ENCODE measurements at regions of chr16 and their contacts with region 1.

Region 1: DNA sequence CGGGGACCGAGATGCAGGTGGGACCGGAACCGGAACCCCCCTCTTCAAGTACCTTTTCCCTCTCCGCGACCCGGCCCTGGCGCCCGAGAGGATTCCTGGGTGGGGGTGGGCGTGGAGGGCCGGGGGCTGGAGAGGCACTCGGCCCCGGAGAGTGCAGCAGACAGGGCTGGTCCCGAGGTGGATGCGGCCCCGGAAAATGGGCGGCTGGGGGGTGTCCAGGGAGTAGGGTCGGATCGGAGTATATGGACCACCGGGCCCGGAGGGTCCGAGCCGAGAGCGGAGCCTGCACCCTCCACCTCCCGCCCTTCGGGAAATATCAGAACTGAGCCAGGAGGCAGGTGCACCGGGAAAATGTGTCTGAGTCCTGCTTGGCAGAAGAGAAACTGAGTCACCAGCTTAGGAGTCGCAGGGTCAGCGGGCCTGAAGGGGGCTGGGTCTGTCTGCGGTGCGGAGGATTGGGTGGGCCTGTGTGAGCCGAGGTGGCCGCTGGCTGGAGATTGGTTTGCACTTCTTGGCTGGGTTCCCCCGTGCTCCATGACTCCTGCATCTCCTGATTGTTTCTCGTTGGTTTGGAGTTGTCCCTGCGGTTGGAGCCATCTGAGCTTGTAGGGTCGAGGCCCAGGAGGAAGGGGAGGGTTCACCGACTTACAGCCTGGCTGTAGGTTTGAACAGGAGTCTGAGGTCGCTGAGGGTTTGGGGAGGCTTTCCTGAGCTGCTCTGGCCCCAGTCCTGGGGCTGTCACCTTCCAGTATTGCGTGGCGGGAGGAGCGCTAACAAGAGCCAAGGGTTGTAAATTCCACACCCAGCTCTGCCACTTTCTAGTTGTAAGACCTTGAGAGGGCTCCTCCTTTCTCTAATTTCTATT is 518 bp downstream of the SH2B1 start:
- DNase-seq: no peak
- ATAC-seq: no peak
- H3K4me3 Mint-ChIP-seq: peak overlapping the region; percentile 98
- H3K27ac Mint-ChIP-seq: peak overlapping the region; percentile 95
- H3K4me1 Mint-ChIP-seq: peaks cover 22% of the 10 kb centered on the region
- H3K27me3 Mint-ChIP-seq: no peaks in the 10 kb centered on the region

Region 2: DNA sequence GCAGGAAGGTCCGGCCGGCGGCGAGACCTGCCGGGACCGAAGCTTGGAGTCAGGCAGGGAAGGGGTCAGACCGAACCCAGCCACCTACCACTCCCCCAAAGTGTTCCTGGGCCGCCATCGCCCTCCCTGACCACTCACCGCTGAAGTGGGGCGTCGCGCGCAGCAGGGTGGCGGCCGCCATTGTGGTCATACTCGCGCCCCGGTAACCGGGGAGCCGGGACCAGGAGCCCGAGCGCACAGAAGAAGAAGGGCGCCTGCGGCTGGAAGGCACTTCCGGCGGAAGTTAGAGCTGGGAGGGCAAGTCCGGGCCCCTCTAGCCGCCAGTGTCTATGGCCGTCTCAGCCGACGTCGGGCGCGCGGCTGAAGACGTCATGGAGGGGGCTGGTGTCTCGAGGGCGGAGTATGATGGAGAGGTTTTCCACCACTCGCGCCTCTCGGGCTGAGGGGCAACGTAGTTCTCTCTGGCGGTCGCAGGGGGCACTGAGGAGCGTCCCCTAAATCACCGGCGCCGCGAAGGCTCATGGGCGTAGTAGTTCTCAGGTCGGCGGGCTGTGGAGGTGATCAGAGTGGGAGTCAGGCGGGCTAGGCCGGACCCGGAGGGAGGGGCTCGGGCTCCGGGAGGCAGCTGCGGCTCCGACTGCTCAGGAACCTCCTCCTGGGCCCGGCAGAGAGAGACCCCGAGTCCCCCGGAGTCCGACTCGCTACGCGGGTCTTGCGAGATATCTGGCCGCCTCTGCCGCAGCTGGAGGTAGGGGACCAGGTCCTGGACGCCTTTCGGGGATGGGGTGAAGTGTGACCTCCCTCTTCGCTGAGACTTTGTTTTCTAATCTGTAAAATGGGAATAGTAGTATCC is 17.9 kb before region 1 on chr16 and contains the start of gene TUFM:
- POLR2A ChIA-PET with region 1: interaction called, 100 read pairs
- DNase-seq: peak; percentile 96
- ATAC-seq: peak; percentile 92
- H3K4me3 Mint-ChIP-seq: peak within 1 kb of the TSS; percentile 88
- H3K27ac Mint-ChIP-seq: peak within 1 kb of the TSS; percentile 93
- H3K4me1 Mint-ChIP-seq: peaks cover 19% of the 10 kb centered on the region
- H3K27me3 Mint-ChIP-seq: no peaks in the 10 kb centered on the region
- total RNA-seq, gene TUFM: 117 to 119 TPM

Region 3: GRCh38 chr16:28879841-28880588 is 15.9 kb after region 1 on chr16:
- POLR2A ChIA-PET with region 1: interaction called, 46 read pairs
- DNase-seq: peak; percentile 89
- ATAC-seq: peak; percentile 94
- H3K4me3 Mint-ChIP-seq: peak overlapping the region; percentile 92
- H3K27ac Mint-ChIP-seq: peak overlapping the region; percentile 82
- H3K4me1 Mint-ChIP-seq: peaks cover 27% of the 10 kb centered on the region
- H3K27me3 Mint-ChIP-seq: no peaks in the 10 kb centered on the region

Region 4: DNA sequence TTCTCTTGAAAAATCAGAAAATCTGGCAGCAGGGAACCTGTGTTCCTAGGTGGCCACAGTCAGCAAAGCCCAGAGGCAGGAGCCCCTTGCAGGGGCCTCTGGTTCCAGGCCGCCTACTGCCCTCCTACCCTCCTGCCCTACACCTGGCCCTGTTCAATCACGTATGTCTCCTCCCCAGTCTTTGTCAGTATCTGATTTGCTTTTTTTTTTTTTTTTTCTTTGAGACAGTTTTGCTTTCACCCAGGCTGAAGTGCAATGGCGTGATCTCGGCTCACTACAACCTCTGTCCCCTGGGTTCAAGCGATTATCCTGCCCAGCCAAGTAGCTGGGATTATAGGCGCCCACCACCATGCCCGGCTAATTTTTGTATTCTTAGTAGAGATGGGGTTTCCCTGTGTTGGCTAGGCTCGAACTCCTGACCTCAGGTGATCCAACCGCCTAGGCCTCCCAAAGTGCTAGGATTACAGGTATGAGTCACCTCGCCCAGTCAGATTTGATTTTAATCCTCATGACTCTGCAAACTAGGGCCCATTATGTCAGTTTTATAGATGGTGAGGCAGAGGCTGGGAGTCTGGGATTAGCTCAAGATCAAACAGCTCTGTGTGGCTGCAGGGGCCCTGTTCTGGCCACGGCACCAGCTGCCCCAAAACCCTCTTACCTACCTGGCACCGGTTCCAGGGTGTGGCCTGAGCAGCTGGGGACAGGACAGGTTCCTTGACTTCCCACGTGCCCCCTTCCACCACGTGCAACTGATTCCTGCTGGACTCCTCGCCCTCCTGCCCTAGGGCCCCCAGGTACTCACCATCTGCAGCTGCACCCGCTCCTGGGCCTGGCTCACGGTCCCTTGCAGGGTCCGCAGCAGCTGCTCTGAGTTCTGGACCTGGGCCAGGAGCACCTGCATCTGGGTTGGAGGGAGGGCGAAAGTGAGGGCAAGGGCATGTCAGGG is 46.2 kb after region 1 on chr16:
- POLR2A ChIA-PET with region 1: no interaction called
- DNase-seq: no peak
- ATAC-seq: no peak
- H3K4me3 Mint-ChIP-seq: no peak overlapping the region
- H3K27ac Mint-ChIP-seq: no peak overlapping the region
- H3K4me1 Mint-ChIP-seq: no peaks in the 10 kb centered on the region
- H3K27me3 Mint-ChIP-seq: no peaks in the 10 kb centered on the region

Region 5: DNA sequence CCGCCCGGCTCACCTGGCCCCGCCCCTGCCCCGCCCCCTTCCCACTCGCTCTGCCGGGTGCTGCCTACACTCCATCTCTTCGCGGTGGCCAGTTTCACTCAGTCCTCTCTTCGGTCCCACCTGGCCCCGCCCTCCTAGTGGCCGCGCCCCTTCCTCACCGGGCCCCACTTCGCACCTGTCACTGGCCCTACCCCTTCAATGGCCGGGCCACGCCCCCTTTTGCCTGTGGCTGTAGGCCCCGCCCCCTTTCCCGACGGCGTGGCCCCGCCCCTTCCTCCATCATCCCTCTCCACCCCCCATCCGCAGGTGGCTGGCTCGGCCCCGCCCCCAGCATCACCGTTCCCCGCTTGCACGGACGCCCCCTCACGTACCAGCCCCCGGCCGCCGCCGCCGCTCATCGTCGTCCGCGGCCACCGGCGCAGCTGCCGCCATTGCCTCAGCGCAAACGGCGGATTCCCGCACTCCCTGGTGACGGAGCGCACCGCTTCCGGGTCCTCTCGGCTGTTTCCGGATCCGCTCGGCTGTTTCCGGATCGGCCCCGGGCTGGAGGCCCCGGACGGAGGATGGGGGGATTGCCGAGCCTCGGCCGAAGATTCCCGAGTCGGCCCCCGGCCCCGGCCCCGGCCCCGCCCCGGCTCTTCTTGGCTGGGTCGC is 60.7 kb after region 1 on chr16 and contains the start of gene RABEP2:
- POLR2A ChIA-PET with region 1: interaction called, 11 read pairs
- DNase-seq: peak; percentile 99
- ATAC-seq: peak; percentile 88
- H3K4me3 Mint-ChIP-seq: peak within 1 kb of the TSS; percentile 99
- H3K27ac Mint-ChIP-seq: peak within 1 kb of the TSS; percentile 98
- H3K4me1 Mint-ChIP-seq: peaks cover 20% of the 10 kb centered on the region
- H3K27me3 Mint-ChIP-seq: no peaks in the 10 kb centered on the region
- total RNA-seq, gene RABEP2: 23.7 to 25.6 TPM

Region 6: DNA sequence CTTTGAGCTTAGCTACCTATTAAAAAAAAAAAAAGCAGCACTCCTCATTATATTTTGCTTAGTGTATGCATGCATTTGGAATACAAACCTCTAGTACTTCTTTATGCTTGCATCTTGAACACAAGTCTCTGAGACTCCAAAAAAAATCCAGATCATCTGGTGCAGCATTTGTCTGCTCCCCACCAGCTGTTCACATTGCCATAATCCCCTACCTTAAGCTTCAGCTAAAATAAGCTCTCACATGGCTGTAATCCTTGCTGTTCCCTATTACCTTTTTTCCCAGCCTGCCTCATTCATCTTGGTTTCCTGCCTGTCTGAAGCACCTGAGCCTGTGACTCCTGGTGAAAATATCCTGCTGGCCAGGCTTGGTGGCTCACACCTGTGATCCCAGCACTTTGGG is 79.1 kb after region 1 on chr16:
- POLR2A ChIA-PET with region 1: interaction called, 11 read pairs
- DNase-seq: no peak
- ATAC-seq: no peak
- H3K4me3 Mint-ChIP-seq: no peak overlapping the region
- H3K27ac Mint-ChIP-seq: no peak overlapping the region
- H3K4me1 Mint-ChIP-seq: peaks cover 13% of the 10 kb centered on the region
- H3K27me3 Mint-ChIP-seq: peaks cover 5% of the 10 kb centered on the region

Measured in activated naive CD8-positive, alpha-beta T cell treated with anti-CD3 and anti-CD28 coated beads, Interleukin-2, amount 10 ng/mL, durations not matched to agents 7 days and 5 days (primary cell).